GM12878 (cell line): ENCODE measurements at regions of chr5 and their contacts with region 1.

Region 1: DNA sequence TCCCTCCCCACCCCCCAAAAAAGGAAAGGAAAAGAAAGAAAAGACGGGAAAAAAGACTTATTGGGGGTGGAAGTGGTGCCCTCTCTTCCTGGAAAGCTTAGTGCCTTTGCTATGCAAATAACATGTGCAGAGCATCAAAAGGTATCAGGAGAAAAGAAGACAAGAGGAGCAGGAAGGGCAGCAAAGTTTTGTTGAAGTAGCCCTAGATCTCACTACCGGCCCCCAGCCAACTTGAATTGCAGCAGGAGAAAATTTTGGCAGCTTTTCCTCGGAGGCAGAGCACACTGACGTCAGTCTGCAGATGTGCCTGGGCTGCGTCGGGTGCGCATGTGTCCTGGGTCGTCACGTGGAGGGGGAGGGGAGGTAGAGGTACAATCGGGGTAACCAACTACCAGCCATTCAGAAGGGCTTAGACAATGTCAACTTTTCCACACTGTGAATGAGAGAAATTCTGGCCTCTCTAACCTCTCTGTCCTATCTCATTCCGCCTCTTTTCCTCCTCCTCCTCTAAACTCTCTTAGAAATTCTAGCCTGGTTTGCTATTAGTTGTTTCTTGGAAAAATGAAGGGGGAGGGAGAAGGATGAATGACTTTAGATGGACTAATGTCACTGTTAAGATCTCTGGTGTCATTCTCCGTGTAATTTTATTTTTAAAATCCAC is at the start of gene ADAMTS6:
- DNase-seq: peak; percentile 55
- ATAC-seq: peak; percentile 86
- H3K4me3 ChIP-seq: peak within 1 kb of the TSS; percentile 79
- H3K27ac ChIP-seq: peak within 1 kb of the TSS; percentile 78
- H3K4me1 ChIP-seq: peaks cover 4% of the 10 kb centered on the region; the same call in 1 of the 2 replicates
- H3K27me3 ChIP-seq: no peaks in the 10 kb centered on the region
- CTCF ChIP-seq: no peak
- EP300 ChIP-seq: no peak
- POLR2A ChIP-seq: peak; percentile 59
- RAD21 ChIP-seq: no peak
- polyA plus RNA-seq, gene ADAMTS6: 1.1 to 1.2 TPM

Region 2: GRCh38 chr5:64818245-64818644 is 663.5 kb before region 1 on chr5:
- CTCF ChIA-PET with region 1: interaction called, 192 read pairs
- POLR2A ChIA-PET with region 1: no interaction called
- RAD21 ChIA-PET with region 1: interaction called, 168 read pairs
- SMC1A ChIA-PET with region 1: interaction called, 154 read pairs
- in situ Hi-C with region 1: loop called (anchors 5 kb)
- intact Hi-C with region 1: no loop called
- DNase-seq: no peak
- ATAC-seq: no peak
- H3K4me3 ChIP-seq: no peak overlapping the region
- H3K27ac ChIP-seq: no peak overlapping the region
- H3K4me1 ChIP-seq: peaks cover 15% of the 10 kb centered on the region
- H3K27me3 ChIP-seq: no peaks in the 10 kb centered on the region
- CTCF ChIP-seq: no peak
- EP300 ChIP-seq: no peak
- POLR2A ChIP-seq: no peak
- RAD21 ChIP-seq: no peak

Region 3: DNA sequence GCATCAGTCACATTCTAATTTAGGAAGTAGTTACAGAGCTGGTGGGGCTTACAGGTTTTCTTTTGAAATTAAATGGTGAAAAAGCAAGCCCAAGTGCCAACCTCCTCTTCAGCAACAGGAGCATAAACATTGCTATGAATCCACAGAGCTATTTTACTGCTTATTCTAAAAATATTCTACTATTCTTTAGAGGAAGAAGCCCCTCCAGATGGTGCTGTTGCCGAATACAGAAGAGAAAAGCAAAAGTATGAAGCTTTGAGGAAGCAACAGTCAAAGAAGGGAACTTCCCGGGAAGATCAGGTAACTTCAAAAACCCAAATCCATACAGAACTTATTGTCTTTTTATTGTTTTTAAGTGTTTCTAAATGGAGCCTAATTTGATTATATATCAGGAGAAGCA is 510.3 kb before region 1 on chr5:
- CTCF ChIA-PET with region 1: interaction called, 90 read pairs
- POLR2A ChIA-PET with region 1: interaction called, 3 read pairs
- RAD21 ChIA-PET with region 1: interaction called, 97 read pairs
- SMC1A ChIA-PET with region 1: interaction called, 91 read pairs
- in situ Hi-C with region 1: loop called (anchors 5 kb)
- intact Hi-C with region 1: loop called (anchors 2 kb)
- DNase-seq: no peak
- ATAC-seq: peak; percentile 60
- H3K4me3 ChIP-seq: no peak overlapping the region
- H3K27ac ChIP-seq: no peak overlapping the region
- H3K4me1 ChIP-seq: no peaks in the 10 kb centered on the region
- H3K27me3 ChIP-seq: no peaks in the 10 kb centered on the region
- CTCF ChIP-seq: peak in 2 of 3 experiments; percentile 27 to 47; a peak in 3 of 6 replicates
- EP300 ChIP-seq: no peak
- POLR2A ChIP-seq: no peak
- RAD21 ChIP-seq: peak; percentile 81

Region 4: DNA sequence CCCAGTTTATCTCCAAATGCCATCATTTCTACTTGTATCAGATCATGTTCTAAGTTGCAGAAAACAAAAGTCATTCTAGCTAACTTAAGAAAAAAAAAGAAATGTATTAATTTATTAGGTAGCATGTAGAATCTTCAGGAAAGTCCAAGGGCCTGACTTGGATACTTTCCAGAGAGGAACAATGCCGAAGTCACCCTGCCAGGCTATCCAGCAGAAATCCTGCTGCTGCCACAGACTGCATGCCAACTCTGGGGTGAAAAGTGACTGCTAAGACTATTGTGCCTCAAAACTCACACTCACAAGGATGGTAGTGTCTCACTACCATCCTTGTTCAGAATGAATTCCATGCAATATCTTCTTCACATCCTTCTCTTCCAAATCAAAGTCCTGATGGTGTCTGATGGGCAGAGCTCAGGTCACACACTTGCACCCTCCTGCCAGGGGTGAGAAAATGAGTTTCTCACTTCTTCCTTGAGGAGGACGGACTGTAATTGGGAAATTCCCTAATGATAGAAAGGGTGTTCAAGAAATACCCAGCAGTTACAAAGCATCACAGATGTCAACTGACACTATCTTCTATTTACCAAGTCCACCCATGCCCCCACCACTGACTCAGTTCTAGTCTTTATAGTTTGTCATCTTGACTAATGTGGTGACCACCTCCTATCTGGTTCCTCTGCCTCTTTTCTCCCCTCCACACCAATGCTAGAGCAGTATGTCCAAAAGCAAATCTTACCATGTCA is 433.6 kb before region 1 on chr5:
- CTCF ChIA-PET with region 1: interaction called, 17 read pairs
- POLR2A ChIA-PET with region 1: interaction called, 4 read pairs
- RAD21 ChIA-PET with region 1: interaction called, 12 read pairs
- SMC1A ChIA-PET with region 1: interaction called, 47 read pairs
- in situ Hi-C with region 1: no loop called
- intact Hi-C with region 1: loop called (anchors 5 kb)
- DNase-seq: peak; percentile 71
- ATAC-seq: peak; percentile 86
- H3K4me3 ChIP-seq: no peak overlapping the region; the same call in 1 of the 2 replicates
- H3K27ac ChIP-seq: peak overlapping the region; percentile 87
- H3K4me1 ChIP-seq: peaks cover 60% of the 10 kb centered on the region
- H3K27me3 ChIP-seq: no peaks in the 10 kb centered on the region
- CTCF ChIP-seq: no peak
- EP300 ChIP-seq: peak in 1 of 2 experiments; percentile 54; a peak in 1 of 4 replicates
- POLR2A ChIP-seq: no peak
- RAD21 ChIP-seq: 0 out of 2 replicates have a peak, but pooled peaks have one; percentile 1

Region 5: GRCh38 chr5:65076251-65076869 is 405.4 kb before region 1 on chr5:
- CTCF ChIA-PET with region 1: interaction called, 61 read pairs
- POLR2A ChIA-PET with region 1: interaction called, 5 read pairs
- RAD21 ChIA-PET with region 1: interaction called, 90 read pairs
- SMC1A ChIA-PET with region 1: interaction called, 55 read pairs
- in situ Hi-C with region 1: no loop called
- intact Hi-C with region 1: no loop called
- DNase-seq: no peak
- ATAC-seq: peak; percentile 93
- H3K4me3 ChIP-seq: no peak overlapping the region
- H3K27ac ChIP-seq: no peak overlapping the region
- H3K4me1 ChIP-seq: peaks cover 17% of the 10 kb centered on the region
- H3K27me3 ChIP-seq: no peaks in the 10 kb centered on the region
- CTCF ChIP-seq: peak; percentile 35 to 54 (median 43)
- EP300 ChIP-seq: no peak
- POLR2A ChIP-seq: no peak
- RAD21 ChIP-seq: peak; percentile 66

Region 6: GRCh38 chr5:65252977-65253376 is 228.8 kb before region 1 on chr5:
- CTCF ChIA-PET with region 1: no interaction called
- POLR2A ChIA-PET with region 1: no interaction called
- RAD21 ChIA-PET with region 1: no interaction called
- SMC1A ChIA-PET with region 1: interaction called, 10 read pairs
- in situ Hi-C with region 1: no loop called
- intact Hi-C with region 1: no loop called
- DNase-seq: no peak
- ATAC-seq: no peak
- H3K4me3 ChIP-seq: no peak overlapping the region
- H3K27ac ChIP-seq: no peak overlapping the region
- H3K4me1 ChIP-seq: no peaks in the 10 kb centered on the region
- H3K27me3 ChIP-seq: no peaks in the 10 kb centered on the region
- CTCF ChIP-seq: no peak
- EP300 ChIP-seq: no peak
- POLR2A ChIP-seq: no peak
- RAD21 ChIP-seq: no peak

Region 7: GRCh38 chr5:65468633-65469032 is 13.1 kb before region 1 on chr5:
- CTCF ChIA-PET with region 1: interaction called, 6 read pairs
- POLR2A ChIA-PET with region 1: interaction called, 6 read pairs
- RAD21 ChIA-PET with region 1: interaction called, 14 read pairs
- SMC1A ChIA-PET with region 1: interaction called, 19 read pairs
- in situ Hi-C with region 1: no loop called
- intact Hi-C with region 1: no loop called
- DNase-seq: no peak
- ATAC-seq: no peak
- H3K4me3 ChIP-seq: no peak overlapping the region
- H3K27ac ChIP-seq: no peak overlapping the region
- H3K4me1 ChIP-seq: no peaks in the 10 kb centered on the region
- H3K27me3 ChIP-seq: no peaks in the 10 kb centered on the region
- CTCF ChIP-seq: no peak
- EP300 ChIP-seq: no peak
- POLR2A ChIP-seq: no peak
- RAD21 ChIP-seq: no peak